Sigmoid colon (tissue), 7 donors: ENCODE measurements at regions of chr21 and their contacts with region 1.

Region 1: GRCh38 chr21:33924079-33924765 is 8.6 kb upstream of the ATP5PO start:
- DNase-seq: peak; percentile 93
- H3K4me3 ChIP-seq: no peak overlapping the region
- H3K27ac ChIP-seq: peak overlapping the region in 3 of 4 donors; percentile 64 to 78 (median 68)
- H3K4me1 ChIP-seq: peaks cover 0 to 13% (median 11%) of the 10 kb centered on the region in 4 donors
- H3K27me3 ChIP-seq: no peaks in the 10 kb centered on the region
- CTCF ChIP-seq: peak; percentile 87 to 96 (median 94)
- EP300 ChIP-seq: no peak
- POLR2A ChIP-seq: no peak

Region 2: GRCh38 chr21:34020005-34020847 is 96.0 kb after region 1 on chr21:
- intact Hi-C with region 1: no loop called
- DNase-seq: no peak
- H3K4me3 ChIP-seq: no peak overlapping the region
- H3K27ac ChIP-seq: peak overlapping the region in 1 of 4 donors; percentile 28
- H3K4me1 ChIP-seq: peaks cover 0 to 27% (median 21%) of the 10 kb centered on the region in 4 donors
- H3K27me3 ChIP-seq: no peaks in the 10 kb centered on the region
- CTCF ChIP-seq: no peak
- EP300 ChIP-seq: no peak
- POLR2A ChIP-seq: no peak

Region 3: DNA sequence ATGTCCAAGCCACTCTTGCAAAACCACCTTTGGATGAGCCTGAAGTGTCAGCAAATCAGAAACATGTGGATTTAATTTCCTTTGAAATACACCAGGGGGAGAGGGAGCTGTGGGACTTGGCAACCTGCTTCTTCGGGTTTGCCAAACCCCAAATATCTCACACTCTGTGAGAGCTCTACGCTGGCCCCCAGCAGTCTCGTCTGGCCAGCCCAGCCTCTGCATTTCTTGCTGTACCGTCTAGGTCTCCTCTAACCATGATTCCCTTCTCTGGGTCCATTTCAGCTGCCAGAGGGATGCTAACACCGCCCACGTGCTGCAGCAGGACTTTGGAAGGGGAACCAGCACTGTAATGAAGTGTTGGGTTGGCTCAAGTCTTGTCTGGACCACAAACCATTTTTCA is 263.7 kb after region 1 on chr21:
- intact Hi-C with region 1: no loop called
- DNase-seq: no peak
- H3K4me3 ChIP-seq: no peak overlapping the region
- H3K27ac ChIP-seq: no peak overlapping the region
- H3K4me1 ChIP-seq: peaks cover 0 to 14% (median 9%) of the 10 kb centered on the region in 4 donors
- H3K27me3 ChIP-seq: no peaks in the 10 kb centered on the region
- CTCF ChIP-seq: no peak
- EP300 ChIP-seq: no peak
- POLR2A ChIP-seq: no peak

Region 4: GRCh38 chr21:34351786-34352241 is 427.6 kb after region 1 on chr21:
- intact Hi-C with region 1: loop called (anchors 2 kb)
- DNase-seq: no peak
- H3K4me3 ChIP-seq: no peak overlapping the region
- H3K27ac ChIP-seq: no peak overlapping the region
- H3K4me1 ChIP-seq: peaks cover 0 to 18% (median 14%) of the 10 kb centered on the region in 4 donors
- H3K27me3 ChIP-seq: no peaks in the 10 kb centered on the region
- CTCF ChIP-seq: peak; percentile 63 to 74 (median 68)
- EP300 ChIP-seq: no peak
- POLR2A ChIP-seq: no peak